ENCODE measurements at regions of chr19 and their contacts with region 1.

Region 1: GRCh38 chr19:40549007-40549708 is 27.5 kb upstream of the SHKBP1 start:
- DNase-seq: peak; percentile 78
- ATAC-seq: peak; percentile 85 to 87
- H3K4me3 ChIP-seq: no peak overlapping the region
- H3K27ac ChIP-seq: no peak overlapping the region
- H3K4me1 ChIP-seq: no peaks in the 10 kb centered on the region
- H3K27me3 ChIP-seq: peaks cover 46% of the 10 kb centered on the region
- CTCF ChIP-seq: peak; percentile 55

Region 2: GRCh38 chr19:40603389-40604135 is 54.4 kb after region 1 on chr19:
- intact Hi-C with region 1: loop called (anchors 10 kb)
- DNase-seq: peak; percentile 99
- ATAC-seq: peak; percentile 85 to 89
- H3K4me3 ChIP-seq: peak overlapping the region; percentile 59
- H3K27ac ChIP-seq: peak overlapping the region; percentile 83
- H3K4me1 ChIP-seq: peaks cover 70% of the 10 kb centered on the region
- H3K27me3 ChIP-seq: peaks cover 36% of the 10 kb centered on the region
- CTCF ChIP-seq: no peak

Region 3: DNA sequence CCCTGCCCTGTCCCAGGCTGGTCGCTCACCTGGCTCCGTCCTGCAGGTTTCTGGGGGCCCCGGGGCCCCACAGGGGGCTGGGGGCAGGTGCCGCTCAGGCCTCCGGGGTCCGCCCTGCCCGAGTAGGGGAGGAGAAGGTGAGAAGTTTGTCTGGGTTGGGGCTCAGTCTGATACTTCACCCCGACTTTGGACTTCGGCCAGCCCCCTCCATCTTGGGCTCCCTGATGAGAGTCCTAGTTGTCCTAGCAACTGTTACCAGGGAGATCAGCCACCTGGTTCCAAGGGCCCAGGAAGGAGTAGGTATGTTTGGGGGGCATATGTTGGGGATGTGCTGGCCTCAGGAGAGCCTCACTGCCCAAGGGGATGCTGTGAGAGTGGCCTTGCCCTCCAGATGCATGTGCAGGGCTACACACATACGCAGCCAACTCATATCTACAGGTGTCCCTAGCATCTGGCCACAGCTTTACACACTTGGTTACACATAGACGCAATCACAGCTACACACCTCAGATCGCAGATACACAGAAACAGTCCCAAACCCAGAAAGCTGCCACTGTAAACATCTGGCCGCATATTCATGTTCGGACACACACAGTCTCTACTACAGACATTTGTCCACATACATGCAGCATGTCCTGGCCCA is 137.8 kb after region 1 on chr19:
- intact Hi-C with region 1: no loop called
- DNase-seq: no peak
- ATAC-seq: no peak
- H3K4me3 ChIP-seq: no peak overlapping the region
- H3K27ac ChIP-seq: peak overlapping the region; percentile 31
- H3K4me1 ChIP-seq: peaks cover 26% of the 10 kb centered on the region
- H3K27me3 ChIP-seq: no peaks in the 10 kb centered on the region
- CTCF ChIP-seq: no peak

Measured in lower lobe of right lung (tissue), 2 donors.